Caco-2 (cell line): ENCODE measurements at regions of chr2 and their contacts with region 1.

Region 1: DNA sequence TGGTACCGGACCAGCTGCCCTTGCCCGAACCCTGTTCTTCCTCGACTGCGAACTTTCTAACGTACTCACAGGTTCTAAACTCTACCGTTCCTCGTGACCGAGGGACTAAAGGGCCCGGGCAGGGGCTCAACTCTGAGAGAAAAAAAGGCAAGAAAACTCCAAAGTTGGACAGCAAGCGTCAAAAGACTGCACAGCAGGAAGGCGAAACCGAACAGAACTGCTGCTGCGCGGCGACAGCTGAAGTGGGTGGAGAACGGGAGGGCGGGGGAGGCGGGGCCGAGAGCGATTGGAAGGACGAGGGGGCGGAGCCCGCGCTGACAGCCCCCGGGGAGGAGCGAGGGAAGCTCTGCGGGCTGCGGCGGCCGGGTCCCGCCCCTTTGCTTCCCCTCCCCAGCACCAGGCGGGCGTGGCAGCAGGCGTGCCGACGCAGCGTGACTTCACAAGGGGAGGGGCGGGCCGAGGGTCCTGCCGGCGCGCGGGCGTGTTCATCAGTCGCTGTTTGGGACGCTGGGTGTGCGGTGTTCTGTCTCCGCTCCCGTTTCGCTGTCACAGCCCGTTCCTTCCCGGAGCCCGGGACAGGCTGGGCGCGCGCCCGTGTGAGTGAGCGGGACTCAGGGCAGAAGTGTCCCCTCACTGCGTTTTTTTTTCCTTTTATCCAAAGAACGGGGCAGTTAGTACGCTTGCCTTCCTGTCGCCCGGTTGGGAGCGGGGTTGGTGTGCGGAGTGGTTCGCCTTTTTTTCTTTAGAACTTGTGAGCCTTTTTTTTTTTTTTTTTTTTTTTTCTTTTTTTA is at the start of gene NABP1:
- DNase-seq: peak; percentile 98 to 99
- H3K4me3 ChIP-seq: peak within 1 kb of the TSS; percentile 87
- H3K4me3 Mint-ChIP-seq: peak within 1 kb of the TSS; percentile 99
- H3K27ac Mint-ChIP-seq: peak within 1 kb of the TSS; percentile 99
- H3K4me1 ChIP-seq: peaks cover 25% of the 10 kb centered on the region
- H3K4me1 Mint-ChIP-seq: peaks cover 12% of the 10 kb centered on the region
- H3K27me3 ChIP-seq: no peaks in the 10 kb centered on the region; the same call in 1 of the 2 replicates
- H3K27me3 Mint-ChIP-seq: no peaks in the 10 kb centered on the region
- CTCF ChIP-seq: no peak
- total RNA-seq, gene NABP1: 89.8 and 91.4 TPM in 2 replicates

Region 2: GRCh38 chr2:191574232-191574631 is 103.6 kb before region 1 on chr2:
- CTCF ChIA-PET with region 1: interaction called, 3 read pairs
- POLR2A ChIA-PET with region 1: interaction called, 15 read pairs
- intact Hi-C with region 1: no loop called
- DNase-seq: peak in 1 of 2 experiments; percentile 14
- H3K4me3 ChIP-seq: no peak overlapping the region
- H3K4me3 Mint-ChIP-seq: peak overlapping the region; percentile 24
- H3K27ac Mint-ChIP-seq: peak overlapping the region; percentile 79
- H3K4me1 ChIP-seq: peaks cover 59% of the 10 kb centered on the region
- H3K4me1 Mint-ChIP-seq: peaks cover 49% of the 10 kb centered on the region
- H3K27me3 ChIP-seq: no peaks in the 10 kb centered on the region
- H3K27me3 Mint-ChIP-seq: no peaks in the 10 kb centered on the region
- CTCF ChIP-seq: no peak

Region 3: DNA sequence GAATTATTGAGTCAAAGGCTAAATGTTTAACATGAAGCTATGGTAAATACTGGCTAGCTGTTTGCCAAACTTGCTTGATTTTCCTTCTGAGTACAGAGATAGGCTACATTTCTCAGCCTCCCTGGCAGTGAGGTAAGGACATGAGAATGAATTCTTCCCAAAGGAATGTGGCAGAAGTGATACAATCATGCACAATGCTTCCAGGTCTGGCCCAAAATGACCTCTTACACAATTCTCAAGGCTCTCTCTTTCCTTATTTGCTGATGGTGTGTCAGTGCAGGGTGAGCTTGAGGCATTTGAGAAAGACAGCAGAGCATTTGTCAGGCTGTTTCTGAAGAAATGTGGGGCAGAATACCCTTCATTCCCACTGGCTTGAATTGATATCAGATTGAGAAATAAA is 95.5 kb before region 1 on chr2:
- CTCF ChIA-PET with region 1: no interaction called
- POLR2A ChIA-PET with region 1: interaction called, 23 read pairs
- intact Hi-C with region 1: loop called (anchors 1 kb)
- DNase-seq: peak; percentile 79 to 80
- H3K4me3 ChIP-seq: no peak overlapping the region
- H3K4me3 Mint-ChIP-seq: peak overlapping the region; percentile 46
- H3K27ac Mint-ChIP-seq: peak overlapping the region; percentile 97
- H3K4me1 ChIP-seq: peaks cover 45% of the 10 kb centered on the region
- H3K4me1 Mint-ChIP-seq: peaks cover 13% of the 10 kb centered on the region
- H3K27me3 ChIP-seq: no peaks in the 10 kb centered on the region
- H3K27me3 Mint-ChIP-seq: no peaks in the 10 kb centered on the region
- CTCF ChIP-seq: no peak

Region 4: GRCh38 chr2:191625016-191625415 is 52.8 kb before region 1 on chr2:
- CTCF ChIA-PET with region 1: interaction called, 4 read pairs
- POLR2A ChIA-PET with region 1: interaction called, 15 read pairs
- intact Hi-C with region 1: loop called (anchors 1 kb)
- DNase-seq: peak; percentile 40 to 54
- H3K4me3 ChIP-seq: no peak overlapping the region
- H3K4me3 Mint-ChIP-seq: no peak overlapping the region
- H3K27ac Mint-ChIP-seq: peak overlapping the region; percentile 89
- H3K4me1 ChIP-seq: peaks cover 76% of the 10 kb centered on the region
- H3K4me1 Mint-ChIP-seq: peaks cover 56% of the 10 kb centered on the region
- H3K27me3 ChIP-seq: no peaks in the 10 kb centered on the region
- H3K27me3 Mint-ChIP-seq: no peaks in the 10 kb centered on the region
- CTCF ChIP-seq: no peak

Region 5: DNA sequence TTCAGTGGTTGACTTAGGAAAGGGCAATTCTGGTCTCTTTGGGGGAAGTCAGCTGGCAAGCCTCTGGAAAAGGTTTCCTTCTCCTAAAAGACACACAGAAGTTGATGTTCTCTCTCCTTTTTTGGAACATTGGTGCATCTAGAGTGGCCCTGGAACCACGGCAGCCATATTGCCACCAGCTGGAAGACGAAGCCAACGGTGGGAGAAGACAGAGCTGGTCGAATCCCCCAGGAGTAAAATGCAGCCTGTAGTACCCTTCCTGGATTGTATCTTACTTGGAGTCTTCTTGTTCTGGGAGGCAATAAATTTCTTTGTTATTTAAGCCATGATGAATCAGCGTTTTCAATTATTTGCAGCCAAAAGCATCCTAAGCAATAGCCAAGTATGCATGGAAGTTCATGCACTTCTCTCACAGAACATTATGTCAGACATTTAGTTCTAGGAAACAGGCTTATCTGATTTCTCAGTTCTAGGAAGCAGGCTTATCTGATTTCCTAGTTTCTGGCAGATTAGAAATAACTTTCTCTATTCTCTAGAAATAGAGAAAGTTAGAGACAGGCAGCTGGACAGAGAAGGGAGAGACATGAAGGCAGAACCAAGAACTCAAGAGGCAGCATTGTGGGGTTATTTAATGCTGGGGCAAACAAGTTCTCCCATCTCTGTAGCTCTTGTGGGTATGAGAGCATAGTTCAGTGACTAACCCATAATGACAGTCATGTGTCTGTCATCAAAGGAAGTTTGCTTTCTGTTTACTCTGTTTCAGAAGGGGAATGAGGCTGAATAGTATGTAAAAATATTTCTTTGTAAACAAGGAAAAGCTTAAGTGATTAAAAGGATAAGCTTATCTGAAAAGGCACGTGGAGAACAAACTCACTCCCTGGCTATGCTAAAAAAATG is 40.4 kb before region 1 on chr2:
- CTCF ChIA-PET with region 1: interaction called, 7 read pairs
- POLR2A ChIA-PET with region 1: interaction called, 74 read pairs
- intact Hi-C with region 1: loop called (anchors 1 kb)
- DNase-seq: peak in 1 of 2 experiments; percentile 66
- H3K4me3 ChIP-seq: no peak overlapping the region
- H3K4me3 Mint-ChIP-seq: peak overlapping the region; percentile 66
- H3K27ac Mint-ChIP-seq: peak overlapping the region; percentile 89
- H3K4me1 ChIP-seq: peaks cover 58% of the 10 kb centered on the region
- H3K4me1 Mint-ChIP-seq: peaks cover 57% of the 10 kb centered on the region
- H3K27me3 ChIP-seq: no peaks in the 10 kb centered on the region
- H3K27me3 Mint-ChIP-seq: no peaks in the 10 kb centered on the region
- CTCF ChIP-seq: no peak

Region 6: GRCh38 chr2:191660575-191661388 is 17.1 kb before region 1 on chr2:
- CTCF ChIA-PET with region 1: no interaction called
- POLR2A ChIA-PET with region 1: interaction called, 12 read pairs
- intact Hi-C with region 1: no loop called
- DNase-seq: no peak
- H3K4me3 ChIP-seq: no peak overlapping the region
- H3K4me3 Mint-ChIP-seq: no peak overlapping the region
- H3K27ac Mint-ChIP-seq: no peak overlapping the region
- H3K4me1 ChIP-seq: peaks cover 18% of the 10 kb centered on the region
- H3K4me1 Mint-ChIP-seq: peaks cover 21% of the 10 kb centered on the region
- H3K27me3 ChIP-seq: no peaks in the 10 kb centered on the region
- H3K27me3 Mint-ChIP-seq: no peaks in the 10 kb centered on the region
- CTCF ChIP-seq: no peak

Region 7: DNA sequence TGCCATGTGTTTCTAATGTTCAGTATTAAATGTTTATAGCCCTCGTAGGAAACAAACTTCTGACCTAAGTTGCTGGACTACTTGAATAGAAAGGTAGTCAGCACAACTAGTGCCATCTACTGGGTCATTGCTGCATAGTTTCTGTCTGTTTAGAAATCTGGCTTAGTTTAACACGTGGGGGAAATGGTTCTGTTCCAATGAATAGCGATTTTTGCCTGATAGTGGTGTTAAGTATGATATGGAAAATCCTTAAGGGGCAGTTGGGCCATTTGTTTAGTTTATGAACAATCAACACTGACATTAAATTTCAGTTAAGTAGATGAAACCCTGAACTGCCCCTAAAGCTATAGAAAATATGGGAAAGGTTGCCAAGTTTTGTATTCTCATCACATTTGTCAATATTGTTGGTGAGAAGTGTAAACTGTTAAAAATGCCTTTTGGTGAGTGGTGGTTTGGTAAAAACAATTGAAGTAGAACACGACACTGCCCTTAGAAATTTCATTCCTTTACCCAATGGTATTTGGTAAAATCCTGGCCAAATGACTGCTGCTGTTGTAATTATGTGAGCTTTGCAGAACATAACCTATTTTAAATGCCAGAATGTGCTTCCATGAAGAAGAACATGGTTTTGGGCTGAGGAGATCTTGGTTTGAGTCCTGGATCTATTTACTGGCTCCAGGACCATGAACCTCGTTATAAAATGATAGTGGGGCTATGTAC is 13.3 kb after region 1 on chr2:
- CTCF ChIA-PET with region 1: interaction called, 4 read pairs
- POLR2A ChIA-PET with region 1: interaction called, 11 read pairs
- intact Hi-C with region 1: loop called (anchors 1 kb)
- DNase-seq: peak; percentile 56 to 70
- H3K4me3 ChIP-seq: no peak overlapping the region
- H3K4me3 Mint-ChIP-seq: peak overlapping the region; percentile 52
- H3K27ac Mint-ChIP-seq: peak overlapping the region; percentile 53
- H3K4me1 ChIP-seq: peaks cover 62% of the 10 kb centered on the region
- H3K4me1 Mint-ChIP-seq: peaks cover 44% of the 10 kb centered on the region
- H3K27me3 ChIP-seq: no peaks in the 10 kb centered on the region
- H3K27me3 Mint-ChIP-seq: no peaks in the 10 kb centered on the region
- CTCF ChIP-seq: peak; percentile 72 to 82

Region 8: DNA sequence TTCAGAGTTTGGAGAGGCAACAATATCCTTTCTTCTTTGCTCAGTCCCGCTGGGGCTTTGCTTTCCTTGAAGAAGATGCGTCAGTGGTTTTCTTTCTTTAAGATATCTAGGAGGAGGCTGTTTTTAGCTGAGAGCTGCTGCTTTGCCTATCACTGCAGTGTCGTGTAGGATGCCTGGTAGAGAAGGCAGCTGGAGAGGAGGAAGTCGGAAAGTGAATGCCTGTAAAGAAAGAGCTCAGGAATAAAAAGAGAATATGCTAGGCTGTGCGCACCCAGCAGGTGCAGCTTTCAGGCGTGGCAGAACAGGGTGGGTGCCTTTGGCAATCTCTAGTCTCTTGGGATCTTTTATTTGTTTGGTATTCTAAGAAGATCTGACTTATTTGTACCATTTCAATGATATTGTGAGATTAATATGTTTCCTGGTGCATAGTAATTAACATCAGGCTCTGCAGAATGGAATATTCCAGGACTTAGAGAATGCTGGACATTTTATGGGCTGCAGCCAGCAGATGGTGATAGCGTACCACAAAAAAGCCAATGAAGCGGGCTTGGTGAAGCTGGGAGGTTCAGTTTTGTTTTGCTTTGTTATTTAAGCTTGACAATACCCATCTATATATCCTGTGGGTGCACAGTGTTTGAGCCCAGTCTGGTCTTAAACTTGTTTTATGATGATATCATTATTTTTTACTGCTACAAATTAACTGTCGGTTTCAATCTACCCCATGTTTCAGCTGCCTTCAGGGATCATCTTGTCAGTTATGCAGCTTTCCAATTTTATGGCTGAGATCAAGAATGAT is 134.2 kb after region 1 on chr2:
- CTCF ChIA-PET with region 1: no interaction called
- POLR2A ChIA-PET with region 1: no interaction called
- intact Hi-C with region 1: no loop called
- DNase-seq: peak; percentile 58 to 70
- H3K4me3 ChIP-seq: no peak overlapping the region
- H3K4me3 Mint-ChIP-seq: no peak overlapping the region
- H3K27ac Mint-ChIP-seq: no peak overlapping the region
- H3K4me1 ChIP-seq: no peaks in the 10 kb centered on the region
- H3K4me1 Mint-ChIP-seq: no peaks in the 10 kb centered on the region
- H3K27me3 ChIP-seq: no peaks in the 10 kb centered on the region
- H3K27me3 Mint-ChIP-seq: no peaks in the 10 kb centered on the region
- CTCF ChIP-seq: peak; percentile 79 to 82